ENCODE measurements at regions of chr11 and their contacts with region 1.

Region 1: DNA sequence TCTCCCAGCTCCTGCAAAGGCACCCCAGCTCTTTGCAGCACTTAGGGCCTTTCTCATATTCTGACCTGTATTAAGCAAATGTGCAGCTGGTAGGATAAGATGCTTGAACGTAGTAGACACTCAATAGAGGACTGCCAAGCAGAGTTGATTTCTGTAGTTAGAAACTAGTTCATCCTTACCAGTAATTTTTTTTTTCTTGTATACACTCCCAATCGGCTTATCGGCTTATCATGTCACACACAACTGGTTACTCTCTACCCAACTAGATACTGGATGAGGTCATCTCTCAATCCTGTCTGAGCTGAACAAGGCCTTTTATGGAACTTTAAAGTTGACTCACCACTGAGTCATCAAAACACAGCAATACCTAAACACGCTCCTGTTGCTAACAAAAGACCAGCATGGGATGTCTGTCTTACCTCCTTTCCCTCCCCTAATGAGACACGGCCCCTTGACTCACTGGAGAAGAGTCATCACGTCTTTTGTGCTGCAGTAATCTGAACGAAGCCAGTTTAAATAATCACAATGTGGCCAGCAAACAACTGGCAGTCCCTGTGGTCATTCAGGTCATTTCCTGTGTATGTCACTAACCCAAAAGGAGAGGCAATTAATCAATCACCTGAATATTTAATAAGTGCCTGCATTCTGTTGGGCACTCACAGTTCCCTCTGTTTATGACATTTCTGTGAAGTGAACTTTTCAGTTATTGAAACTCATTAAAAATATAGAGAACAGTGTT is 7.5 kb upstream of the WEE1 start:
- DNase-seq: no peak

Region 2: GRCh38 chr11:9137293-9138132 is 428.5 kb before region 1 on chr11:
- intact Hi-C with region 1: no loop called
- DNase-seq: peak; percentile 93

Region 3: DNA sequence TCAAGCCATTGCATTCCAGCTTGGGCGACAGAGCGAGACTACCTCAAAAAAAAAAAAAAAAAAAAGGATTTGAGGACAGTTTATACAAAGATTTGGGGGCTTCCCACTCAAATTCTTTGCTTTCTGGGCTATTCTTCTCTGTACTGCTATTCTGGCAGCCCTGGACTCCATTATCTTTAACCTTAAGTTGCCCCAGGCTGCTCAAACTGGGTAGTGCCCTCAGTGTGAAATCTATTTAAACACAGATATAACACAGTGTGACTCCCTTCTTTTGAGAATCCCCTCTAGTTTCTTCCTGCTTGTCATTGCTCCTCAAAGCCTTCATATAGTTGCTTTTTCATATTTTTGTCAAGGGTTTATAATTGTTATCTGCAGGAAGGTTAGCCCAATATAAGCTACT is 42.0 kb before region 1 on chr11:
- intact Hi-C with region 1: no loop called
- DNase-seq: no peak

Region 4: GRCh38 chr11:9534791-9535781 is 30.9 kb before region 1 on chr11:
- intact Hi-C with region 1: loop called in 1 of 2 experiments (anchors 5 kb)
- DNase-seq: peak; percentile 93

Measured in posterior vena cava (tissue), 2 donors.